Activated CD8-positive, alpha-beta T cell treated with anti-CD3 and anti-CD28 coated beads, Interleukin-2, amount 10 ng/mL, durations not matched to agents 7 days and 5 days (primary cell): ENCODE measurements at regions of chr17 and their contacts with region 1.

Region 1: GRCh38 chr17:35870906-35871819 is 2.5 kb upstream of the HEATR9 start:
- DNase-seq: peak; percentile 68
- ATAC-seq: peak; percentile 61
- H3K4me3 Mint-ChIP-seq: no peak overlapping the region
- H3K27ac Mint-ChIP-seq: peak overlapping the region; percentile 69
- H3K4me1 Mint-ChIP-seq: peaks cover 65% of the 10 kb centered on the region
- H3K27me3 Mint-ChIP-seq: no peaks in the 10 kb centered on the region

Region 2: DNA sequence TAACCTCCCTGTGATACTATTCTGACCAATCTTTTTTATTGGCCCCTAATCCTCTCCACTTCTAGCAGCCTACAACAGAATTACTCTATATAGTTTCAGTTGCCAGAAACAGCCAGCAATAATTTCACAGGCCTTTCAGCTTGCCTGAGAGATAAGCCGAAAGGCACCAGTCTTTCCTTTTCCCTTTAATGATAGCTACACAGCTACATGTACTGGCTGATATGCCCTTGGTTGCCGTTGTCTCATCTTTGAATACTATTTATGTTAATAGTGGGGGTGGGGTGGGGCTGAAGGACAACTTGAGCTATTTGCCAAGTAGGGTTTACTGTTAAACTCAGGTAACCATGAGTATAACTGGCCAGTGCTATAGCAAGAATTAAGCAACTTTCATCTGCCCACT is 175.6 kb before region 1 on chr17:
- CTCF ChIA-PET with region 1: no interaction called
- POLR2A ChIA-PET with region 1: no interaction called
- DNase-seq: no peak
- ATAC-seq: no peak
- H3K4me3 Mint-ChIP-seq: no peak overlapping the region
- H3K27ac Mint-ChIP-seq: no peak overlapping the region
- H3K4me1 Mint-ChIP-seq: peaks cover 1% of the 10 kb centered on the region
- H3K27me3 Mint-ChIP-seq: no peaks in the 10 kb centered on the region

Region 3: DNA sequence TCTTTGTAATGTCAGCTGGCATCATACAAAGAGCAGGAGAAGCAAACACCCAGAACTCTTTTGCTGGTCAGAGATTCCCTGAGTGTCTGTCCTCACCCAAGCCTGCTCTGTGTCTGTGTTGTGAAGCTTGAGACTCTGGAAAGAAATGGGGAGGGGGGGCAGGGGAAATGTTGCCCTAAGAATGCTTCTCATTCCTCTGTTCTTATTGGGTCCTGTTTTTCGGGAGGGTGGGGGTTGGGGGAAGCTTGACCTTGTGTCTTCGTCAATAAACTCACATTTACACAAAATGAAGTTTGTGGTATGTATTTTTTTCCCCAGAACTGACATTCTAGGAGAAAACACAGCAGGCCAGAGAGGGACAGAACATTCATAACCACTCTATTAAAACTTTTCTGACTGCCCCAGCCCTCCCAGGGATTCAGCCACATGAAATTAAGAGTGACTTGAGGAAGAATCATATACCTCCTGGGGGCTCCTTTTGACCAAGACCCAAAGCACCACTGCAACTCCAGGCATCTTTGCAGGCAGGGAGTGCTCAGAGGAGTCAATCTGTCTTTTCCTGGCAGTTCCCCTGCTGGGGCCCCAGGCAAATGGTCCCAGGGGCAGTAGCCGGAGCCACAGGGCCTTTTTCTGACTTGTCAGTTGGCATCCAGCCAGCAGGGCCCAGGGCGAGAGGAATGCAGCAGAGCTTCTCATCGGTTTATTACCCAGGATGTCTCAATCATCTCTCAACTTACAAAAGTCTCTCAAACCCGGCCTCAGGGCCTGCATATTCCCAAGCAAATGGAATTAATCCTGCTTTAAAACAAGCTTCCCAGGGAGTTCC is 144.8 kb before region 1 on chr17:
- CTCF ChIA-PET with region 1: no interaction called
- POLR2A ChIA-PET with region 1: no interaction called
- DNase-seq: no peak
- ATAC-seq: no peak
- H3K4me3 Mint-ChIP-seq: no peak overlapping the region
- H3K27ac Mint-ChIP-seq: no peak overlapping the region
- H3K4me1 Mint-ChIP-seq: peaks cover 11% of the 10 kb centered on the region
- H3K27me3 Mint-ChIP-seq: peaks cover 10% of the 10 kb centered on the region

Region 4: GRCh38 chr17:35889818-35890763 is 18.9 kb after region 1 on chr17:
- CTCF ChIA-PET with region 1: interaction called, 14 read pairs
- POLR2A ChIA-PET with region 1: interaction called, 121 read pairs
- DNase-seq: no peak
- ATAC-seq: no peak
- H3K4me3 Mint-ChIP-seq: peak overlapping the region; percentile 42
- H3K27ac Mint-ChIP-seq: peak overlapping the region; percentile 83
- H3K4me1 Mint-ChIP-seq: peaks cover 77% of the 10 kb centered on the region
- H3K27me3 Mint-ChIP-seq: no peaks in the 10 kb centered on the region

Region 5: GRCh38 chr17:35898283-35899070 is 27.3 kb after region 1 on chr17:
- CTCF ChIA-PET with region 1: interaction called, 10 read pairs
- POLR2A ChIA-PET with region 1: interaction called, 121 read pairs
- DNase-seq: peak; percentile 78
- ATAC-seq: peak; percentile 37
- H3K4me3 Mint-ChIP-seq: peak overlapping the region; percentile 43
- H3K27ac Mint-ChIP-seq: peak overlapping the region; percentile 77
- H3K4me1 Mint-ChIP-seq: peaks cover 84% of the 10 kb centered on the region
- H3K27me3 Mint-ChIP-seq: no peaks in the 10 kb centered on the region

Region 6: GRCh38 chr17:36212966-36213365 is 341.8 kb after region 1 on chr17:
- CTCF ChIA-PET with region 1: no interaction called
- POLR2A ChIA-PET with region 1: no interaction called
- DNase-seq: no peak
- ATAC-seq: no peak
- H3K4me3 Mint-ChIP-seq: no peak overlapping the region
- H3K27ac Mint-ChIP-seq: no peak overlapping the region
- H3K4me1 Mint-ChIP-seq: peaks cover 25% of the 10 kb centered on the region
- H3K27me3 Mint-ChIP-seq: peaks cover 23% of the 10 kb centered on the region